Activated CD4-positive, alpha-beta T cell treated with anti-CD3 and anti-CD28 coated beads, Interleukin-2, amount 10 ng/mL, durations not matched to agents 24 days and 14 days (primary cell): ENCODE measurements at regions of chr11 and their contacts with region 1.

Region 1: DNA sequence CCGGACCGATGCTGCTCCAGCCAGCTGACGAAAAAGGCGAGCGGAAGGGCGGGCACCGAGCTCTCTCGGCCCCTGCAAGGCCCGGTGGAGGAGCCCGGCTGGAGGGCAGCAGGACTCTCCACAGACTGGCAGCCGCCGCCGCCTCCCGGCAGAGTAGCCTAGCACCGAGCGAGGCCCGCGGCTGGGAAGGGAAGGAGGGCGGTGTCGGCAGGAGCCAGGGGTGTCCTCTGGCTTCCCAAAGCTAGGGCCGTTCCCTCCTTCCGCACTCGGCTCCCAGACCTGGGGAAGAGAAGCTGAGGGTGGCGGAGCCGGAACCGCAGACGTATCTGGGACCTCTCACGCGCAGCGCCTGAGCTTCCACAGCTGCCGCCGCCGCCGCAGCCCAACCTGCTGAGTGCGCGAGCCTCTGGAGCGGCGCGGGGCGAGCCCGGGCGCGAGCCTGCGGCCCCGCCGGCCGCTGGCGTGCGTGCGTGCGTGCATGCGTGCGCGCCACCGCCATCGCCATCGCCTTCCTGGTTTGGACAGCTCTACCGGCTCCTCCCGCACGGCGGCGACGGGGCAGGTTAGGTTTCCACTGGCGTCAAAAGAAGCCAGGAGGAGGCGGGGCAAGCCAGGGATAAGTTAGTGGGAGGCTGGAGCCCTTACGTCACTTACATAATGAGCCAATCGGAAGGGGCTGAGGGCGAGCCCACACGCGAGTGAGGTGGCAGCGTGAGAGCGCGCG is at the start of gene RAB6A:
- DNase-seq: peak; percentile 100
- H3K4me3 Mint-ChIP-seq: peak within 1 kb of the TSS; percentile 97
- H3K27ac Mint-ChIP-seq: peak within 1 kb of the TSS; percentile 92
- H3K4me1 Mint-ChIP-seq: peaks cover 32% of the 10 kb centered on the region
- H3K27me3 Mint-ChIP-seq: peaks cover 3% of the 10 kb centered on the region
- total RNA-seq, gene RAB6A: 74.3 and 79.5 TPM in 2 replicates

Region 2: GRCh38 chr11:73779084-73779902 is 18.5 kb after region 1 on chr11:
- intact Hi-C with region 1: loop called (anchors 1 kb)
- DNase-seq: peak; percentile 99
- H3K4me3 Mint-ChIP-seq: peak overlapping the region; percentile 92
- H3K27ac Mint-ChIP-seq: peak overlapping the region; percentile 98
- H3K4me1 Mint-ChIP-seq: peaks cover 8% of the 10 kb centered on the region
- H3K27me3 Mint-ChIP-seq: no peaks in the 10 kb centered on the region

Region 3: DNA sequence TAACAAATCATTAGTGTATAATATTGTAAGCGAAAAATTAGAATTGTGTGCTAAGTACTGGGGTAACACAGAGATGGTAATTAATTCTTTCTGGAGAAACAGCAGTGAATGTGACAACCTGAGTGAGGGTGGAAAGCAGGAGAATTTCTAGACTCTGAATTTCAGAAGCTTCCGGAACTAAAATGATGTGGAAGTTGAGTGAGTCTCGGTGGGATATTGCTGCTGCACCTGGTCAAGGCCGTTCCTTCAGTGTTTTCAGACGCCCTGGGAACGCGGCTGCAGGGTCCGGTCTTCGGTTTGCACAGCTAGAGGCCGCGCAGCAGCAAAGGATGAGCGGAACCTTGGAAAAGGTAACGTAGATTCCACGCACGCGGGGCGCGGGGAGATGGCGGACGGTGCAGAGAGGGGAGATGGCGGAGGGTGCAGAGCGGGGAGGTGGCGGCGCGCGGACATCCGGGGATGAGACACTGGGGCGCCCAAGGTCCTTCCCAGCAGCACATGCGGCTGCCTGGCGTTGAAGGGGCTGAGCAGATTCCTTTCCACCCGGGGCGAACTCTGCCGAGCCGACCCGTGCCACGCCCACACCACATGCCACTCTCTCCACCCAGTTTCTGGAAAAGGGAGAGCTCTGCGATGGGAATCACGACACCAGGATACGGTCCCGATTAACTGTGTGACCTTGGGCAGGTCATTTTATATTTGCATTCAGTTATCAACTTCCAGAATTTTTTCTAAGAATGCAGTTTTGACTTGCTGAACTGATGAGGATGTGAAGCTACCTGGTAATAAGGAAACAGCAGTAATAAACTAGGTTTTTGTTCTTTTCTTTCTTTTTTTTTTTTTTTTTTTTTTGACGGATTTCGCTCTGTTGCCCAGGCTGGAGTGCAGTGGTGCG is 27.0 kb after region 1 on chr11 and contains the start of gene MRPL48:
- intact Hi-C with region 1: loop called (anchors 1 kb)
- DNase-seq: peak; percentile 96
- H3K4me3 Mint-ChIP-seq: peak within 1 kb of the TSS; percentile 99
- H3K27ac Mint-ChIP-seq: peak within 1 kb of the TSS; percentile 95
- H3K4me1 Mint-ChIP-seq: peaks cover 14% of the 10 kb centered on the region
- H3K27me3 Mint-ChIP-seq: no peaks in the 10 kb centered on the region
- total RNA-seq, gene MRPL48: 67.2 and 69.0 TPM in 2 replicates

Region 4: DNA sequence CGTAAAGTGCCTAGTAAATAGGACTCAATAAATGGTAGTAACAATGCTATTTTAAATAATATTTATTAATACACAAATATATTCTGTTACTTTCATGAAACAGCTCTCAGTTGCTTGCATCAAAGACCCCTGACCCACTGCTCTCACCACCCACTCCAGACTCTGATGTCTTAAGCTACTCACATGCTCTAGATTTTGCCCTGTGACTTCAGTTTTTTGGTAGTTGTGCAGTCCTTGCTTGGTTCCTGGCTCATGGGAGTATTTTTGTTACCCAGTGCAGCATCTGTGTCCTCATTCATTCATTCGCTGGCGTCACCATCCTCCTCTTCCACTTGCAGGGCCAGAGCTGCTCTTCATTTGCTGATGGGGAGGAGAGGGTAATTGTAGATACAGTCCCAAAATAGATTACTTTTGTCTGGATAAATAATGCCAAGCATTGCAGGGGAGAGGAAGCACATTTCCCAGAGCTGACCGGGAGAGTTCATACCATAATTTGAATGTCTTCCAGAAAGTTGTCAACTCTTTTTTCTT is 39.5 kb after region 1 on chr11:
- intact Hi-C with region 1: no loop called
- DNase-seq: no peak
- H3K4me3 Mint-ChIP-seq: no peak overlapping the region
- H3K27ac Mint-ChIP-seq: no peak overlapping the region
- H3K4me1 Mint-ChIP-seq: no peaks in the 10 kb centered on the region
- H3K27me3 Mint-ChIP-seq: no peaks in the 10 kb centered on the region

Region 5: DNA sequence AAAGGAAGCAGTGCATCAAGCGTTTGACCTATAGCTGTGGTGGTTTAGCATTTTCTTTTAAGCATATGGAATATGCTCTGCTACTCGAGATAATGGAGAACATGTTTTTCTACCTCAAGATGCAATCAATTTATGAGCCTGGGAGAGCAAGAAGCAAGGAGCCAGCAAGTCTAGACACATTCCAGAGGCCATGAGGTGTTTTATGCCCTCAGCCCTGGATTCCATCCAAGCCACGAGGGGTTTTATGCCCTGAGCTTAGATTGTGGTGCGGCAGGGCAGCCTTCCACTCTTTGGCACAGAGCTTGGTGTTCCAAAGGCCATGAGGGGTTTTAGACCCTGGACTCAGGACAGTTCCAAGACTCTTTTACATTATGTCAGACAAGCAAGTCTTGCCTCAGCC is 178.3 kb after region 1 on chr11:
- intact Hi-C with region 1: no loop called
- DNase-seq: no peak
- H3K4me3 Mint-ChIP-seq: no peak overlapping the region
- H3K27ac Mint-ChIP-seq: no peak overlapping the region
- H3K4me1 Mint-ChIP-seq: no peaks in the 10 kb centered on the region
- H3K27me3 Mint-ChIP-seq: no peaks in the 10 kb centered on the region

Region 6: DNA sequence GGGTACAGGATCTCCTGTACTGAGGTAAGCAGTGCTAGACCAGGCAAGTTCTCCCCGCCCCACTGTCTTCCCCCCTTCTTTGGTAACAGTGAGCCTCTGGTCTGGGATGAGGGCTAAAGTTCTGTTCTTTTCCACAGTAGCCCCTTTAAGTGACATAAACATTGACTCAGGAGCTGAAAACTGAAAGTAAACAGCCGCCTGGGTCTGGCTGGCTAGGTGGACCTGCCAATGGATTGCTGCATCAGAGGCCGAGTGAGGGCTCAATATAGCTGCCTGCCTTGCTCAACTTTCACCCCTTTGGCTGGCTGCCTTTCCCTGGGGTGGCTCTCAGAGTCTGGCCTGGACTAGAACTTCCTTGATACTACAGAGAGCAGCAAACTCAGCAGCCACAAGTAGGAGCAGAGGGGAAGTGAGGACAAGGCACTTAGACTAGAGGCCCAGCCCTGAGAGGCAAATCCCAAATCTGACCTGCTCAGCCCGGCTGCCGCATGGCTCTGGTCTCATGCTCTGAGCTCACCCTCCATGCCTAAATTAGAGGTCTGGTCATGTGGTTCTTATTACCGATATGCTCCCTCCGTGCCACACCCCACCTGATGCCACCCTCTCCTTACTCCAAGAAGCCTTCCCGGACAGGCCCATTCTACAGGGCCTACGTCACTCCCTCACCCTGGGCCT is 257.6 kb after region 1 on chr11:
- intact Hi-C with region 1: no loop called
- DNase-seq: peak; percentile 58
- H3K4me3 Mint-ChIP-seq: peak overlapping the region; percentile 21
- H3K27ac Mint-ChIP-seq: no peak overlapping the region
- H3K4me1 Mint-ChIP-seq: peaks cover 42% of the 10 kb centered on the region
- H3K27me3 Mint-ChIP-seq: no peaks in the 10 kb centered on the region